ENCODE measurements at regions of chr17 and their contacts with region 1.

Region 1: DNA sequence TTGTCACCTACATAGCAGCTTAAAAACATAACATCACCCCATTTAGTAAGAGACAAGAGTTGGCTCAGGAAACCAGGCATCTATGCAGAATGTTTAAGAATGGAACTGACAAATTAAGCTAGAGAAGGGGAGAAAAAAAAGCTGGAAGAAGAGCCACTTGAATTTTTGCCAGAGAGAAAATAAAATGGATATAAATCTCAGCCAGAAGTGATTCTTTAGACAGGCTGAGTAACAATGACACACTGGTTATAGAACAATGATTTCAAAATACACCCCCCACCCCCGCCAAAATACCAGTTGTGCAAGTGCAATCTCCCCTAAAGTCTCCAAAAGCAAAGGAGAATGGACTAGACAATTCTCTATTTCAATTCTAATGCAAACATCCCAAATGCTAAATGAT is 22.4 kb downstream of the LSM12 start:
- DNase-seq: no peak
- ATAC-seq: no peak
- H3K4me3 ChIP-seq: no peak overlapping the region
- H3K27ac ChIP-seq: peak overlapping the region; percentile 6
- H3K4me1 ChIP-seq: peaks cover 37% of the 10 kb centered on the region
- H3K27me3 ChIP-seq: no peaks in the 10 kb centered on the region
- CTCF ChIP-seq: no peak

Region 2: DNA sequence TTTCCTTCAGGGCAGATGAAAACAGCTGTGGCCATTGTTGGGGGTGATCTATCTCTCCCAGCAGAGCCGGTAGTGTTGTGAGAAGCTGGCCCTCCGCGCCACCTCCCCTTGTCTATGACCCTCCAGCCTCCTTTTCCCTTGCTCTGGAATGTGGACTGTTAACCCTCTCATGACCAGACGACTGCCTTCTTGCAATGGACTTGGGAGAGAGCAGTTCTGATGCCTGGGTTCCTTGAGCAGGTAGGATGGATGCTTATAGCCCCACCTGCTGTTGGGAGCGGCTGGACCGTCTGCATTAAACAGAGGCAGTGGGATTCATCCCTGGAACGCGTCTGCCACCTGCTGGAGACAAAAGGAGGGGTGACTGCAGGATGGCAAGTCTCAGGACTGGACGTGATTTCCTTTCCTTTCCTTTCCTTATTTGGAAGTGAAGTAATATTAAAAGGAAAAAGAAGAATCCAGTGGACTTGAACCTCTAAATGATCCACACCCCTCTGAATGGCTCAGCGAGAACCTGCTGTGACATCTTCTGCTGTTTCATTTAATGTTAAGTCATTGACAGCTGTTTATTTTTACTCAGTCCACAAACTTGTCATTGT is 283.7 kb before region 1 on chr17:
- intact Hi-C with region 1: no loop called
- DNase-seq: peak; percentile 92
- ATAC-seq: peak; percentile 91 to 95
- H3K4me3 ChIP-seq: no peak overlapping the region
- H3K27ac ChIP-seq: no peak overlapping the region
- H3K4me1 ChIP-seq: peaks cover 11% of the 10 kb centered on the region
- H3K27me3 ChIP-seq: peaks cover 27% of the 10 kb centered on the region
- CTCF ChIP-seq: peak; percentile 98

Region 3: DNA sequence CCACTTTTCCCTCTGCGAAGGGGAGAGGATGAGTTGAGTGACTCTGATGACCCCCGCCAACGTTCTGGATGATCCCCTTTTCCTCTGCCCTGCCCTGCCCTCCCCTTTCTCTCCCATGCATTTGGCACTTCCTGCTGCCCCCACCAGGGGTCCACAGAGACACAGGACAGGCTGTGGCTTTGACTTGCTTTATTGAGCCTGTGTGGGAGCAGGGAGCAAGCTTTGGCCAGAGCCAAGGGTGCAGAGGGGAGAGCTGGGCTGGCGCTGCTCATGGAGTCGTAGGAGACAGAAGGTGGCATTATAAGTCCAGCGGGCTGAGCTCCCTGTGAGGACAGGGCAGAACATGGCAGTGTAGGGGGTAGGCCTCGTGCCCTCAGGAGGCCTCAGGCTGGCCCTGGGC is 103.4 kb before region 1 on chr17:
- intact Hi-C with region 1: loop called (anchors 10 kb)
- DNase-seq: no peak
- ATAC-seq: no peak
- H3K4me3 ChIP-seq: no peak overlapping the region
- H3K27ac ChIP-seq: no peak overlapping the region
- H3K4me1 ChIP-seq: peaks cover 4% of the 10 kb centered on the region
- H3K27me3 ChIP-seq: peaks cover 23% of the 10 kb centered on the region
- CTCF ChIP-seq: no peak

Region 4: DNA sequence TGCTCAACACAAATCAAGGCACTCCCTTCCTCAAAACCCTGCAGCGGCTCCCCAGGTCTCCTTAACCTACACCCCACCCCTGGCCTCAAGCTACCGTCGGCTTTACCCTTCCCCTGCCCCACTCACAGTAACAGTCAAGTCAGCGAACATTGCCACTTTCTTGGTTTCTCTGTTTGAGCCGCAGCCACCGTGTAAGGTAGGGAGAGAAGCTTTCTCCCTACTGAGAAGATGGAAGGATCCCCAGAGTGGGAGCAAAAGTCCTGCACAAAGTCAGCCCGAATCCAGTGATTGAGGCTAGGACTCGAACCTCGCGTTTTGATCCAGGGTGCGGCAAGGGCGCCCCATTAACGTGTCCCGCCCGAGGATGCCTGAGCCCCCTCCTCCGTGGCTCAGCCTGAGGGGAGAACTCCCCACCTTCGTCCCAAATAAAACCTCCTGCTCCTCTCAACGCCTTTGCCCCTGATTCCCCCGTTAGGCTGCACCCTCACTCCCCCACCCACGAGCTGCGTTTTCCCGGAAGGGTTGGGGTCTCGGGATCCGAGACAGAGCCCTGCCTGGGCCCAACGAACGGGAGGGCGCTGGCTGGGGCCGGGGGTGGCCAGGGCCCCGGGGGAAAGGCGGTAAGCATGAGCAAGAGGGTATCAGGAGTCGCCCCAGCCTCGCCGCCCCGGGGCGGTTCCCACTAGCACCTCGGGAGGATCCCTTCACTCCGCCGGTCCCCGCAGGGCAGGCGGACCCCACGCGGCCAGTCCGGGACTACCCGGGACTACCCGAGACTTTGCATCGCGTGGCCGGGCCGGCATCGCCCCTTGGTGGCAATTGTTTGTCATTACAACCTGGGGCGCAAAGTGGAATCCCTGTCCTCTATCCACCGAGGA is 49.6 kb before region 1 on chr17:
- intact Hi-C with region 1: no loop called
- DNase-seq: peak; percentile 80
- ATAC-seq: peak; percentile 78 to 86
- H3K4me3 ChIP-seq: peak overlapping the region; percentile 17
- H3K27ac ChIP-seq: no peak overlapping the region
- H3K4me1 ChIP-seq: peaks cover 9% of the 10 kb centered on the region
- H3K27me3 ChIP-seq: peaks cover 31% of the 10 kb centered on the region
- CTCF ChIP-seq: peak; percentile 84